ENCODE measurements at regions of chr3 and their contacts with region 1.

Region 1: GRCh38 chr3:31213869-31214486 is 318.7 kb upstream of the STT3B start:
- DNase-seq: no peak
- CTCF ChIP-seq: no peak

Region 2: GRCh38 chr3:31196881-31197364 is 17.1 kb before region 1 on chr3:
- CTCF ChIA-PET with region 1: interaction called, 12 read pairs
- POLR2A ChIA-PET with region 1: no interaction called
- DNase-seq: no peak
- CTCF ChIP-seq: no peak